Panc1 (cell line): ENCODE measurements at regions of chr1 and their contacts with region 1.

Region 1: DNA sequence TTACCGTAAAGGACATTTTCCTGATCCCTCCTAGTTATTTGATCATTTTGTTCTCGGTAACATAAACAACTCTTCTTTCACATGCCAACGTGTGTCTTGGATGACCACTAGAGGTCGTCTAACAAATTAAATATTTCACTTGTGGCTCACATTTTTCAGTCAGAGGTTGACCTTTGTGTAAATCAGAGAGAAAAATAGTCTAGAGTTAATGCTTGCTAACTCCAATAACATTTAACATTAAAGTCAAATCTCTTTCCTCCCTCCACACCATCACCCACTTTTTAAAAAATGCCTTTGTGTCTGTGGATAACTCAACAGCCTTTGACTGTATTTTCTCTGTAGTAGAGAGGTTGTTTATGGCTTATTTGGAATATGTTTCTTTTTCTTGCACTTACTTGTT is 220.5 kb upstream of the B3GALT2 start:
- DNase-seq: no peak
- ATAC-seq: no peak
- H3K4me3 ChIP-seq: no peak overlapping the region
- H3K27ac ChIP-seq: no peak overlapping the region
- H3K4me1 ChIP-seq: no peaks in the 10 kb centered on the region
- H3K27me3 ChIP-seq: no peaks in the 10 kb centered on the region
- CTCF ChIP-seq: peak; percentile 75; the same call in 1 of the 2 replicates

Region 2: DNA sequence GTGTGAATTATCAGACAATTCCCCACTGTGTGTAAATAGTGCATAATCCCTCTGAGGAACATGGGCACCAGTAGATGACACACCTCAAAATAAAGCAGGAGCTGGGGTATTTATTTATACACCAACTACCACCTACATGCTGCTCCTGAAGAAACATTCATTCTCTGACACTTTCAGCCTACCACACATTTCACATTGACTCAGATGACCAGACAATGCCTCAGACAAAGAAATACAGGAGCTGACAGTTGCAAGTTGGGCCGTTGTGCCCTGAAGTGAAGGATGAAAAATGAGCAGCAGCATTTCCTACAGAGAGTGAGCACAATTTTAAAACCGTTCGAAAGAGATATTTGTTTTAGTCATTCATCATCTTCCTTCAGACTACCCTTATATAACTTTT is 534.9 kb before region 1 on chr1:
- CTCF ChIA-PET with region 1: no interaction called
- POLR2A ChIA-PET with region 1: interaction called, 11 read pairs
- in situ Hi-C with region 1: no loop called
- intact Hi-C with region 1: no loop called
- DNase-seq: no peak
- ATAC-seq: no peak
- H3K4me3 ChIP-seq: no peak overlapping the region
- H3K27ac ChIP-seq: no peak overlapping the region
- H3K4me1 ChIP-seq: no peaks in the 10 kb centered on the region
- H3K27me3 ChIP-seq: no peaks in the 10 kb centered on the region; the same call in 1 of the 2 replicates
- CTCF ChIP-seq: no peak

Region 3: DNA sequence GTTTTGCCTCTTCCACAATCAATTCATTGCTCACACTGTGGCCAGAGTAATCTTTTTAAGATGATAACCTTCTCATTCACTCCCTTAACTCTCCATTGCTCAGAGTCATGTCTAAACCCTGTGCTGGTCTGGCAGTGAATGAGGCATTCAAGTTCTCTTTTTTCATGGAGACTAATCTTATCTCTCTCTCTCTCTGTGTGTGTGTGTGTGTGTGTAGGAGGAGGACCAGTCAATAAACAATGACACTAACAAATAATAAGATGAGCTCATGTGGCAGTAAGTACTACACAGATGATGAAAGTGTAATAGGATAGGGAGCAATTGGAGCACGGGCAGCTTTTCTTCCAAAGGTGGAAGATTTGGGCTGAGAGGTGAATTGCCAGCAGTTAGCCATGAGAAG is 98.5 kb before region 1 on chr1:
- CTCF ChIA-PET with region 1: no interaction called
- POLR2A ChIA-PET with region 1: no interaction called
- in situ Hi-C with region 1: no loop called
- intact Hi-C with region 1: no loop called
- DNase-seq: no peak
- ATAC-seq: no peak
- H3K4me3 ChIP-seq: no peak overlapping the region
- H3K27ac ChIP-seq: no peak overlapping the region
- H3K4me1 ChIP-seq: no peaks in the 10 kb centered on the region
- H3K27me3 ChIP-seq: no peaks in the 10 kb centered on the region
- CTCF ChIP-seq: no peak